Psoas muscle (tissue), 8 donors: ENCODE measurements at regions of chr4 and their contacts with region 1.

Region 1: GRCh38 chr4:98467627-98468072 is 190.8 kb downstream of the TSPAN5 start:
- DNase-seq: peak; percentile 29 to 70
- ATAC-seq: peak; percentile 83 to 94 (median 92)
- H3K4me3 ChIP-seq: peak overlapping the region; percentile 60
- H3K27ac ChIP-seq: no peak overlapping the region
- H3K4me1 ChIP-seq: peaks cover 3% of the 10 kb centered on the region
- H3K27me3 ChIP-seq: peaks cover 0 to 4% (median 0%) of the 10 kb centered on the region in 3 donors
- CTCF ChIP-seq: peak; percentile 70

Region 2: DNA sequence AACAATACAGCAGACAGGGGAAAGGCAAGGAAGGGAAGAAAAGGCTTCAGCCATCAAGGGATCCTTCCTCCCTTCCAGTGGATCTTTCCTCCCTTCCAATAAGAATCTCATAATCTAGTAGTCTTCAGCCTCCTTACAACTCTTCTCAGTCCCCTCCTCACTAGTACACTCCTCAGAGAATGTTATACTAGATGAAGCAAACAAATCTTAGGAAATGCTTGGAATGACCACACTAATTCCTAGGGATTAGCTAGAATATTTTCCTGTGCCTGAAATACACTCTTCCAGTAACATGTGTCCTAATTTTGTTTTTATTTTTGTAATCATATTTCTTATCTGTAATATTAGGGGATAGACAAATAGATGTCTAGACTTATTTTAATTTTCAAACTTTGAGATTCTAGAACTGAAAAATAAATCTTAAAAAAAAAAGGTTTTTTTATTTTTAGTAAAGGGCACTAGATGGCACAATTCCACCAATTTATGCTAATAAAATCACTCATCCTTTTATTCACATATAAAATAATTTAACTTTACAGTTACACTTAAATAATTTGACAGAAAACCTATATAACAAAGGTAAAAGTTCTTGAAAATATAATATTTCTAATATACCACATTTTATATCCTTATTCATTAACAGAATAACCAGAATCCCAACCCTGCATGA is 317.4 kb before region 1 on chr4:
- intact Hi-C with region 1: loop called in 1 of 2 experiments (anchors 10 kb)
- DNase-seq: no peak
- ATAC-seq: no peak
- H3K4me3 ChIP-seq: no peak overlapping the region
- H3K27ac ChIP-seq: no peak overlapping the region
- H3K4me1 ChIP-seq: peaks cover 10% of the 10 kb centered on the region
- H3K27me3 ChIP-seq: no peaks in the 10 kb centered on the region
- CTCF ChIP-seq: peak; percentile 17

Region 3: GRCh38 chr4:98577956-98578355 is 110.3 kb after region 1 on chr4:
- intact Hi-C with region 1: no loop called
- DNase-seq: no peak
- ATAC-seq: no peak
- H3K4me3 ChIP-seq: no peak overlapping the region
- H3K27ac ChIP-seq: no peak overlapping the region
- H3K4me1 ChIP-seq: no peaks in the 10 kb centered on the region
- H3K27me3 ChIP-seq: no peaks in the 10 kb centered on the region
- CTCF ChIP-seq: no peak

Region 4: DNA sequence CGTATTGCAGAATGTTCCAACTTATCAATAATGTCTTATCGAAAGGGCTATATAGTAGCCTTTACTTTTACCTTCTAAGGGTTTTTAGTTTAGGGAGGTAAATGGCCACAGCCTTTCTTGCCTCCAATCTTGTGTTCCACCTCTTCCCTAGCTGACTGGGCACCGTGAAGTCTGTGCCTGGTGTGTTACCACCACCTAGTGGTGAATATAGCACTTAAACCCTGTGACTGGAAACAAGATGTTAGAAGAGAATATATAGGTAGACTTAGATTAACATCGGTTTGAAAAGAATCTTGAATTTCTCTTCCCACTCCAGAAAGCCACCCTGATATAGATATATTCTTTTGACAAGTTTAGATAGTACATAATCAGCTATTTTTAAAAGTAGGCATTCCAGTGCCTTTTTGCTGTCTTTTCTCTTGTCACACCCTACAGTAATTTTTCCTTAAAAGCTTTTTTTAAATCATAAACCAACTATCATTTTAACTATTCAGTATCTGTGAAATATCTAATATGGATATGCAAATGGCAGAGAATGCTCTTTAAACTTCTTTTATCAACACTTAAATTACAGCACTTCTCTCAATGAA is 995.3 kb after region 1 on chr4:
- intact Hi-C with region 1: loop called in 1 of 2 experiments (anchors 2 kb)
- DNase-seq: peak in 1 of 2 donors; percentile 27
- ATAC-seq: peak; percentile 68 to 88 (median 82)
- H3K4me3 ChIP-seq: no peak overlapping the region
- H3K27ac ChIP-seq: no peak overlapping the region
- H3K4me1 ChIP-seq: no peaks in the 10 kb centered on the region
- H3K27me3 ChIP-seq: no peaks in the 10 kb centered on the region
- CTCF ChIP-seq: peak; percentile 86